ENCODE measurements at regions of chr5 and their contacts with region 1.

Region 1: DNA sequence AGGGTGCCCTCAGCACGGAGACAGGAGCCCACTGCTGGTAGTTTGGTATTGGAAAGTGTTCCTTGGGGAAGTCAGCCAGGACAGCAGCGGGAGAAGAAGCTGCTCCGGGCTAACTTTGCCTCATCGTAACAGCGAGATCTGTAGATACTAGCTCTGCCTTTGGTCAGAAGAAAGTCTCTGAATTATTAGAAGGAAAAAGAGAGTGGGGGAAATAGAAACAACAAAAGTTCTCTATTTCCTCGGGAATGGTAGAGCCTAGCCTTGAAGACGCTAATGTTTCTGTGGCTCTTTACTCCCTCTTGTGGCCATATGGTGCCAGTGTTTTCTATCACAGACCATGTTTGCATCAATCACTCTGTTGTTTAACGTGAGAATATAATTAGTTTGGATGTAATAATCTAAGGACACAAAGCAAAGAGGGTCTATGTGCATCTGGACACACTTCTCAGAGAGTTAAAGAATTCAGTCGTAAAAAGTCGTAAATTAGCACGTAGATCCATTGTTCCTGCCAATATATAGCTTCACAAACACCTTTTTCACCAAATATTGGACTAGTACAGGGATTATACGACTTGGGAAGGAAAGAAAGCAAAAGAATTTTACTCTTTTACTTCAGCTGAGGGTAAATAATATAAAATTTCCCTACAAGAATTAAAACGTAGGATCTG is 40.2 kb upstream of the HSD17B4 start:
- DNase-seq: peak; percentile 66
- H3K4me3 Mint-ChIP-seq: peak overlapping the region; percentile 67
- H3K27ac Mint-ChIP-seq: no peak overlapping the region
- H3K4me1 Mint-ChIP-seq: peaks cover 33% of the 10 kb centered on the region
- H3K27me3 Mint-ChIP-seq: peaks cover 9% of the 10 kb centered on the region

Region 2: DNA sequence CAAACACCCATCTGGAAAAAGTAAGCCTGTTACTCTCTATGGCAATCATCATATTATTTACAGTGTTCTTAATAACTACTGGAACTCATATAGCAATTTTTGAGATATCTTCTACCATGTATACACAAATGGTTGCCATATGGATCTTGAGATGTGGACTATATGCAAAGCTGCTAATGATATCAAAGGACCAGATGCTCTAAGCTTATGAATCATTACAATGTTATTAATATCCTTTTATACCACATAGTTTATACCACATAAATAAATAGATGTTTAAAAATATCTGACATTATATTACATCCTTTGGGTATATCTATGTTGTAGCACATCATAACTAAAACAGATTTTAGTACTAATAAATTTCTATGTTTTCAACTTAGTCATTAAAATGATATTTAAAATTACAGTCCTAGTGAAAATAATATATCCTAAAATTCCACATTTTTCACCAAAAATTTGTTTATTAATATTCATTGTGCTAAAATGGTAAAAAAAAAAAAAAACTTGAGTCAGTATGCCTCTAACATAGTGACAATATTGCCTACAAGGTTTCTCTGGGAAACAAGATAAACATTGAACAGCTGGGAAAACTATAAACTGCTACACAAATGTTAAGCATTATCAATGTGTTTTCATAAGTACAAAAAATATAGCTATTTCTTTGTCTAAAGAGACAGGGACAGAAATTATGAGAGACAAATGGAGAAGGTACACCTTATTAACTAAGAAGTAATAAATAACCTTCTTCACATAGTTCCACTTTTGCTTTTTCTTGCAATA is 509.2 kb before region 1 on chr5:
- CTCF ChIA-PET with region 1: no interaction called
- POLR2A ChIA-PET with region 1: no interaction called
- DNase-seq: no peak
- H3K4me3 Mint-ChIP-seq: no peak overlapping the region
- H3K27ac Mint-ChIP-seq: no peak overlapping the region
- H3K4me1 Mint-ChIP-seq: no peaks in the 10 kb centered on the region
- H3K27me3 Mint-ChIP-seq: no peaks in the 10 kb centered on the region

Region 3: GRCh38 chr5:119340597-119341218 is 71.4 kb before region 1 on chr5:
- CTCF ChIA-PET with region 1: interaction called, 12 read pairs
- POLR2A ChIA-PET with region 1: no interaction called
- DNase-seq: peak; percentile 83
- H3K4me3 Mint-ChIP-seq: peak overlapping the region; percentile 84
- H3K27ac Mint-ChIP-seq: peak overlapping the region; percentile 91
- H3K4me1 Mint-ChIP-seq: peaks cover 91% of the 10 kb centered on the region
- H3K27me3 Mint-ChIP-seq: no peaks in the 10 kb centered on the region

Region 4: DNA sequence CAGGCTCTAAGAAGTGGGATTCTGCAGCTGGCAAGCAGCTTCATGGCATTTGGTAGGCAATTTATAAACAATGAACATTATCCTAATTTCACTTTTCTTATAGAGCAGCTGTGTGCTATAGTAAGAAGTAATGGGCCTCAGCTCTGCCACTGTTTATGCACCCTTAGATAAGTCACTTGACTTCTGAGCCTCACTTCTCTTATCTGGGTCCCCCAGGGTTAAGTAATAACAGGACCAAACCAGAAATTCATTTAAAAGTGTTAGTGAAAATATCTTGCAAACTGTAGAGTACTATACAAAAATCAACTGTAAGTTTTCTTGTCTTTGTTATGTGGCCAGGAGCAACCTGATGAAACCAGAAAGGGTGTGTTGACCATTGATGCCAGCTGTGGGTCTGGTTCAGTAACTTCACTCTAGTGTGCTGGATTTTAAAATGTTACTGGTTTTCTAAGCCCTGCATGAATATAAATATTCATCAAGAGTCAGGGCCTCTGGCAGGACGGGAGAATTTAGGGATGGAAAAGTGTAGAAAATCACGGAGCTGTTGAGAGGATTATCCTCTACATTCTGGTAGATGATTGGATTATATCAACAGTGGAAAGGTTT is 32.0 kb before region 1 on chr5:
- CTCF ChIA-PET with region 1: no interaction called
- POLR2A ChIA-PET with region 1: no interaction called
- DNase-seq: no peak
- H3K4me3 Mint-ChIP-seq: no peak overlapping the region
- H3K27ac Mint-ChIP-seq: no peak overlapping the region
- H3K4me1 Mint-ChIP-seq: peaks cover 68% of the 10 kb centered on the region
- H3K27me3 Mint-ChIP-seq: no peaks in the 10 kb centered on the region

Region 5: DNA sequence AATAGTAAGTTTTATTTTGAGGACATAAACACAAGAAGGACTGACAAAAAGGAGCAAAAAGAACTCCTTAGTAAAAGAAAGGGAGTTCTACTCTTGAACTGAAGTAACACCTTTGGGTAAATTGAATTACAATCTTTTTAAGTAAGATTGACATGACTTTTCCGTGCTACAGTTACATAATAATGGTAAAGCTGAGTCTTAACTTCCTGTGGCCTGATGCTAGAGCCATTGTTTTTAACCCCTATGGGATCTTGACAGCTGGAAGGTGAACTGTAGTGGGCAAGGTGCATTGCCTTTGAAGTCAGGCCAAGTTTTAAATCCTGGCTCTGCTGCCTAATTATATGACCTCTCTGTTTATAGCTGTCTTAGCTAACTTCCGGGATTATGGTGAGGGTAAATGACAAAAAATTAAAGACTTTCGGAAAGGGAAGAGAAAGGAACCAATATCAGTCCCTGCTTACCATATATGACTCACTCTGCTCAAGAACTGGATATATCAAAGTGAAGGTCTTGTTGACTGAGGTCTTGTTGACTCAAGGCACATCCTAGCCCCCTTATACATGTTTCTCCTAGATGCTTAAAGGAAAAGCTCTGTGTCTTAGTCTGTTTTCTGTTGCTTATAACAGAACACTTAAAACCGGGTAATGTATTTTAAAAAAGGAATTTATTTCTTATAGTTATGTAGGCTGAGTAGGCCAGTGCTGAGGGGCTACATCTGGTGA is 47.0 kb after region 1 on chr5:
- CTCF ChIA-PET with region 1: no interaction called
- POLR2A ChIA-PET with region 1: no interaction called
- DNase-seq: no peak
- H3K4me3 Mint-ChIP-seq: no peak overlapping the region
- H3K27ac Mint-ChIP-seq: no peak overlapping the region
- H3K4me1 Mint-ChIP-seq: peaks cover 6% of the 10 kb centered on the region
- H3K27me3 Mint-ChIP-seq: no peaks in the 10 kb centered on the region